Body of pancreas (tissue), 4 donors: ENCODE measurements at regions of chr3 and their contacts with region 1.

Region 1: DNA sequence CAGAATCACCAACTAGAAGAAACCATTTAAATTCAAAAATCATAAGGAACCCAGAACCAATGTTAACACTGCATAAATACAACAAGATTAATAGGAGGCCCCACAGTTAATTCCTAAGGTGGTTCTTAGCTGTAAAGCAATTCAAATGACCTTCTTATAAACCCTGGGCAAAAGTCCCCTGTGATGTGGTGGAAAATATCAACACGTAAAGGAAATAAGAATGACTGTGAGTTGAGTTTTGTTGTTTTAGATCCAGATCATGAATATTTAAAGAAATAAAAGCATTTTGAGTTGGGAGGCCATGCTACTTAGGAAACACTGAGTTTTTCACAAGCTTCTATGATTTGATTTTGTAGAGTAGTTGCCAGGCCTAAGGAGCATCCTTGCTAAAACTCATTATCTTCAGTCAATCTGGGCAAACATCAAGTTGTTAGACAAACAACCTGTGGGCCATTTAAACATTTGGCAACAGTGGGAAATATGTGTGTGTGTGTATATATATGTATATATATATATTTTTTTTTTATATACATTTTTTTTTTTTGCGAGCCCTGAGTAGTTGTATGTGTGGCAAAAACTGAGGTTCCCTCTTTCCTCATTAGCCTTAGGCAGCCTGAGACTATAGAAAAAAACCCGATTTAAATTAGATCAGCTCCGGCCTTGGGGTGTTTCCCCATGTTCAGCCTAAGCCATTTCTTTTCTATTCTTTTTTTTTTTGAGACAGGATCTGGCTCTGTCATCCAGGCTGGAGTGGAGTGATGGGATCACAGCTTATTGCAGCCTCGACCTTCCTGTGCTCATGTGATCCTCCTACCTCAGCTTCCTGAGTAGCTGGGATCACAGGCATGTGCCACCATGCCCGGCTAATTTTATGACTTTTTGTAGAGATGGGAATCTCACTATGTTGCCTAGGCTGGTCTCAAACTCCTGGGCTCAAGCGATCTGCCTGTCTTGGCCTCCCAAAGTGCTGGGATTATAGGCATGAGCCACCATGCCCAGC is 8.0 kb upstream of the PXK start:
- DNase-seq: no peak
- ATAC-seq: no peak
- H3K4me3 ChIP-seq: no peak overlapping the region
- H3K27ac ChIP-seq: peak overlapping the region in 3 of 4 donors; percentile 31 to 72 (median 53)
- H3K4me1 ChIP-seq: peaks cover 11% of the 10 kb centered on the region
- H3K27me3 ChIP-seq: no peaks in the 10 kb centered on the region
- CTCF ChIP-seq: no peak
- POLR2A ChIP-seq: no peak

Region 2: GRCh38 chr3:58249358-58250092 is 75.2 kb before region 1 on chr3:
- intact Hi-C with region 1: no loop called
- DNase-seq: no peak
- ATAC-seq: no peak
- H3K4me3 ChIP-seq: no peak overlapping the region
- H3K27ac ChIP-seq: no peak overlapping the region
- H3K4me1 ChIP-seq: no peaks in the 10 kb centered on the region
- H3K27me3 ChIP-seq: no peaks in the 10 kb centered on the region
- CTCF ChIP-seq: no peak
- POLR2A ChIP-seq: no peak

Region 3: DNA sequence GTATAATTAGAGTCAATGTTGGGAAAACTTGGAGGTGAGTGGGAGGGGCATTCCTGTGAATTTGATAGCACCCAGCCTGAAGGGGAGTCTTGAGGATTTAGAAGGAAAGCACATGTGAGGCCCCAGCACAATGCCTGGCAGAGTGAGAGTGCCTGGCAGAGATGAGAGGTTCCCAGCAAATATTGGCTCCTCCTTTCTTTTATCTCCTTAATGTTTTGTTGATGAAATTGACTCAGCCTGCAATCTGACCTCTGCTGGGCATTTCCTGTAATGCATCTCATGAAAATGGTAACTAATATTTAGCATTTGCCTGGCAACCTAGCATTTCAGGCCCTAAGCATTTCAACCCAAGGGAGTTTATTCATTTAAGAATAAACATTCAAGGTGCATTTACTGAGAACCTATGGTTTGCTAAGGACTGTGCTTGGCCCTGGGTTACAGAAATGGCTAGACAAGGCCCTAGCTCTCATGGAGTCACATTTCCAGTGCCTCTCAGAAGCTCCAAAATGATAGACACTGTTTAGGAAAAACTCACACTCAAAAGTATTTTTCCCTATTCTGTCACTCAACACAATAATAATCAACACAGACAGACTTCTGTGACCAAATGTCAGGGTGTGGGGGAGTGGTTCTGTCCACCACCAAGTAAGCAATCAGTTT is 90.0 kb after region 1 on chr3:
- intact Hi-C with region 1: loop called (anchors 5 kb)
- DNase-seq: peak; percentile 41 to 65 (median 57)
- ATAC-seq: peak; percentile 83
- H3K4me3 ChIP-seq: no peak overlapping the region
- H3K27ac ChIP-seq: no peak overlapping the region
- H3K4me1 ChIP-seq: no peaks in the 10 kb centered on the region
- H3K27me3 ChIP-seq: no peaks in the 10 kb centered on the region
- CTCF ChIP-seq: peak; percentile 67 to 89 (median 79)
- POLR2A ChIP-seq: no peak